Gastrocnemius medialis (tissue), 4 donors: ENCODE measurements at regions of chr11 and their contacts with region 1.

Region 1: DNA sequence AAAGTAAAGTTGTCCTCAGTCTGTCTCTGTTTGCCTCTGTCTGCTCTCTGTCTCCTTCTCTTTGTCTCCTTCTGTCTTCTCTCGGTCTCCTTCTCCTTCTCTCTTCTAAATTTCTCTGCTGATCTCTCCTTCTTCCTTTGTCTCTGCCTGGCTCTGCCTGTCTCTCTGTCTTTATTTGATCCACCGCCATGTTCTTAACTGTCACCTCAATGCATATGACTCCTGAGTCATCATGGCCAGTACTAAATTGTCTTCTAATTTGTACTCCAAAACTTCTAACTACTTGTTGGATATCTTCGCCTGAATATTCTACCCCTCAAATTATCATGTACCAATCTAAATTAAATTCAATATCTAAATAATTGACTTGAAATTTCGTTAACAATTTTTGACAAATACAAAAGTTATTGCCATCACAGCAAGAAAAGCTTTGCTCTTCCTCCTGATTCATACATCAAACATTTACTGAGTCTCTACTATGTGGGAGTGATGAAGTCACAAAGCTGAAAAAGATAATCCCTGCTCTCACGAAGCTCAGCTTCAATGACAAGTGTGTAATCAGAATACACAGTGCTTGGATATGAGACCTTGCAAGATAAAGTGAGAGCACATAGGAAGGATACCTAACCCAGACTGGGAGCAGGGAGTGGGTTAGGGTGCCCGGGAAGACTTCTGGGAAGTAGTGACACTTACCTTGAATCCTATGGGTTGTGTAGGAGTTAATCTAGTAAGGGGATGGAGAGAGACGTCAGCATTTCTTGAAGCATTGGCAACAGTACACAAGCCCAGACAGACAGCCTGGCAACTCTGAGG is 193.0 kb downstream of the MAML2 start:
- DNase-seq: no peak
- ATAC-seq: no peak
- H3K4me3 ChIP-seq: no peak overlapping the region
- H3K27ac ChIP-seq: no peak overlapping the region
- H3K4me1 ChIP-seq: peaks cover 3 to 7% of the 10 kb centered on the region in 2 donors
- H3K27me3 ChIP-seq: no peaks in the 10 kb centered on the region
- CTCF ChIP-seq: no peak
- POLR2A ChIP-seq: no peak

Region 2: DNA sequence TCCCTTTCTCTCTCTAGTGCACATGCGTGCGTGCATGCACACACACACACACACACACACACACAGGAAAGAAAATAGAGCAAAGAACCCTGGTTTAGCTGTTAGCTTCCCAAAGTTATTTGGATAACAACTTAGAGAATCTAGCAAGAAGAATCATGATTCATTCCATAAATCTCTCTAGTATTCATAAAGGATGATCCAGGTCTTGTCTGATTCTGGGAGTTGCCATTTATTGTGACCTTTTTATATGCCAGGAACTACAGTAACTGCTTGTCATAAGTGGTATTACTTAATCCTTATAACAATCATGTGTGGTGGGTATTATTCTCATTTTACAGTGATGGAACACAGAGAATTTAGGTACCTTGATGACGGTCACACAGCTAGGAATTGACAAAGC is 84.6 kb before region 1 on chr11:
- in situ Hi-C with region 1: loop called in 1 of 4 experiments (anchors 5 kb)
- intact Hi-C with region 1: no loop called
- DNase-seq: no peak
- ATAC-seq: no peak
- H3K4me3 ChIP-seq: no peak overlapping the region
- H3K27ac ChIP-seq: no peak overlapping the region
- H3K4me1 ChIP-seq: no peaks in the 10 kb centered on the region
- H3K27me3 ChIP-seq: no peaks in the 10 kb centered on the region
- CTCF ChIP-seq: no peak
- POLR2A ChIP-seq: no peak